ENCODE measurements at regions of chr1 and their contacts with region 1.

Region 1: GRCh38 chr1:108963052-108963686 is at the start of gene CLCC1:
- DNase-seq: peak; percentile 94 to 95
- ATAC-seq: peak; percentile 96 to 98 (median 96)
- H3K4me3 ChIP-seq: peak within 1 kb of the TSS; percentile 73
- H3K27ac ChIP-seq: peak within 1 kb of the TSS; percentile 94
- H3K4me1 ChIP-seq: peaks cover 19% of the 10 kb centered on the region
- H3K27me3 ChIP-seq: no peaks in the 10 kb centered on the region
- CTCF ChIP-seq: no peak
- total RNA-seq, gene CLCC1: 23.3 to 36.2 (median 30.0) TPM

Region 2: DNA sequence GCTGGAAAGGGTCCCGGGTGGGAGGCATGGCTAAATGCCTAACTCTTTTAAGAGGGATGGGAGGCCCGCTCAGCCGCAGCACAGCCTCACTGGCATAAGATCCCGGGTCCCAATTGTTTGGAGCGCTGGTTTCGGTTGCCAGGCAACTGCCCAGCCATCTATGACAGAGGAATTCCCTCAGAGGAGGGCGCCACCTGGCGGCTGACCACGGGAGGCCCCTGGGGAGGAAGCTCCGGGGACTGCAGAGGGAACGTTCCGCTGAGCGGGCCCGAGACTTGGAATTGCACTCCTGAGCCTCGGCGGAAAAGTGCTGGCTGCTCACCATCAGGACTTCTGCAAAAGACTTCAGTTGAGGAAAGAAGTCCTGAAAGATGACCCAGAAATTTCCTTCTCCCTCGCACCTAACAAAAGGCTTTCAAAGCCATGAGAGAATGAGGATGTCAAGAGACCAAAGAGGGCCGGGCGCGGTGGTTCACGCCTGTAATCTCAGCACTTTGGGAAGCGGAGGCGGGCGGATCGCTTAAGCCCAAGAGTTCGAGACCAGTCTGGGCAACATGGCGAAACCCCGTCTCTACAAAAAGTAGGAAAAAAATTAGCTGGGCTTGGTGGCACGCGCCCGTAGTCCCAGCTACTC is 149.6 kb after region 1 on chr1:
- intact Hi-C with region 1: loop called in 1 of 2 experiments (anchors 5 kb)
- DNase-seq: peak; percentile 94 to 97
- ATAC-seq: peak; percentile 96 to 99 (median 97)
- H3K4me3 ChIP-seq: peak overlapping the region; percentile 56
- H3K27ac ChIP-seq: no peak overlapping the region
- H3K4me1 ChIP-seq: peaks cover 10% of the 10 kb centered on the region
- H3K27me3 ChIP-seq: peaks cover 0 to 37% (median 0%) of the 10 kb centered on the region in 3 donors
- CTCF ChIP-seq: peak; percentile 97

Measured in psoas muscle (tissue), 8 donors.